Activated CD4-positive, alpha-beta memory T cell treated with anti-CD3 and anti-CD28 coated beads for 36 hours (primary cell): ENCODE measurements at regions of chr6 and their contacts with region 1.

Region 1: DNA sequence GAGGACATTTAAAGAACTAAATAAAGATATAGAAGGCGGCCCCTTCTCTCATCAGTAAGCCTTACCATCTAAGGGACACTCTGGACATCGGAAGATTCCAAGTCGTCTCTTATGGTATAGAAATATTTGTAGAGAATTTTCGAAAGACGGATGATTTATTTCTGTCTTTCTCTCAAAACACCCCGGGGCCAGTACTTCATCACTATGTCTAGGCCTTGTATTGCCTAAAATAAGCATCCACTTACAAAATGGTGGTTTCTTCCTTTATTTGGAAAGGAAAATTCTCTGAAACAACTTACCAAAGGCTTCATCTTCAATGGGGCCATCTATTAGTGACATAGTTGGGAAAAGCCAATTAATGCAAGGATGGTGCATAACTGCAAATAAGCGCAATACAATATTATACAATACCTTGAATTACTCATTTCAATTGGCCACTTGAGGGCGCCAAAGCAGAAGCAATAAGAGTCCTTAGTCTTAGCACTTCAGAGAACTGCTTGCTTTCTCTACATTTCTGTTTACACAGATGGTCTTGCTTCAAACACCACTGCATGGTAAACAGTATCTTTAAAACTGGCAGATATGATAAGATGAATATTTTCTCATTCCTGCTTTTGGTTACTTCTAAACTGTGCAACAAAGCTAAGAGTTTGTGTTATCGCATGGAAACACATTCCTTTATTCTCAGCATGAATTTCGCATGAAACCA is 113.2 kb downstream of the VIP start:
- DNase-seq: peak; percentile 66
- H3K4me3 Mint-ChIP-seq: no peak overlapping the region
- H3K27ac Mint-ChIP-seq: no peak overlapping the region
- H3K4me1 Mint-ChIP-seq: peaks cover 5% of the 10 kb centered on the region
- H3K27me3 Mint-ChIP-seq: peaks cover 10% of the 10 kb centered on the region

Region 2: DNA sequence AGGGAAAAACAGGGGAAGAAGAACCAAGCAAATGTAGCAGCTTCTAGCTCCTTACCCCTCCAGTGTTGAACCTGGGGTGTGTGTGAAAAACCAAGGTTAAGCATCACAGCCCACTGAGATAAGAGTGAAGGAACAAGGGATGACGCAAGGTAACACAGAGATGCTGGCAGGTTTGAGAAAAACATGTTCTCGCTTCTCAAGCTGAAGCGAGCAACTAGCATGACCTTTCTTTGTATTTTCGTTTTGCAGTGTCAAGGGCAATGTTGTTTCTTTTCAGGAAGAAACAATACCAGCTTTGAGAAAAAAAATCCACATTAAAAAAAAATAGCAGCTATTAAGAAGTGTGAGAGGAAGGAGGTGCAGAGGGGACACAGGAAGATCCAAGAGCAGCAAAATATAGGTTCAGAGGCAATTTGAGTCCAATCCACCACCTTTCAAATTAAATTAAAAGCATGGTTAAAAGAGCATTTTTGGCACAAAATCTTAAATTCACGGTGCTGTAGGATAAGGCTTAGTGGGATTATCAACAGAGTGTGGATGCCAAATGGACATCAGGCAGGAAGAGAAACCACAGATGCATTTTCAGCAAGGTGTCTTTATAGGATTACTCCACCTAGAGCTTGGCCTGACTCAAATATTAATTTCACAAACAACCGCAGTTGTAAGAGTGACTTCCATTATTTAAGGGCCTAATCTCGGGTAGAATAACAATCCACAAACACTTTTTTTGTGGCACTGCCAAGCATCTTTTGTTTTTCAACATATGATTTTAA is 297.5 kb before region 1 on chr6:
- CTCF ChIA-PET with region 1: no interaction called
- POLR2A ChIA-PET with region 1: no interaction called
- intact Hi-C with region 1: no loop called
- DNase-seq: no peak
- H3K4me3 Mint-ChIP-seq: no peak overlapping the region
- H3K27ac Mint-ChIP-seq: no peak overlapping the region
- H3K4me1 Mint-ChIP-seq: no peaks in the 10 kb centered on the region
- H3K27me3 Mint-ChIP-seq: no peaks in the 10 kb centered on the region

Region 3: GRCh38 chr6:152783217-152783878 is 80.4 kb before region 1 on chr6:
- CTCF ChIA-PET with region 1: no interaction called
- POLR2A ChIA-PET with region 1: no interaction called
- intact Hi-C with region 1: no loop called
- DNase-seq: no peak
- H3K4me3 Mint-ChIP-seq: no peak overlapping the region
- H3K27ac Mint-ChIP-seq: no peak overlapping the region
- H3K4me1 Mint-ChIP-seq: no peaks in the 10 kb centered on the region
- H3K27me3 Mint-ChIP-seq: no peaks in the 10 kb centered on the region

Region 4: DNA sequence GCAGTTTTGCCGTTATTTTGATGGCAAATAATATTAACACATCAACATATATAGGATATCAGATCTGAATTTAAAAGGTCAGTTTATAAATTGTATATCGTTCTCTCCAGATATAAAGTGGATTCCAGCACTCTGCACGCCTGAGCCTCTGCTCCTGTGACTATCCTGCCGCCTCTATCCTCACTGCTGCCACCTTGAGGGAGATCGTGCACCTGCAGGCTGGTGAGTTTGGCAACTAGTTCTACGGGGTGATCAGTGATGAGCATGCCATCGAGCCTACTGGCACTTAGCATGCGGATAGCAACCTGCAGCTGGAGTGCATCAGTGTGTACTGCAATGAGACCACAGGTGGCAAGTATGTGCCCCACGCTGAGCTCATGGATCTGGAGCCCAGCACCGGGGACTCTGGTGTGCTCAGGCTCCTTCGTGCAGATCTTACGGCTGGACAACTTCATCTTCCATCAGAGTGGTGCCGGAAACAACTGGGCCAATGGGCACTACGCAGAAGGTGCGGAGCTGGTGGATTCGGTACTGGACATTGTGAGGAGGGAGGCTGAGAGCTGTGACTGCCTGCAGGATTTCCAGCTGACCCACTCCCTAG is 34.1 kb after region 1 on chr6:
- CTCF ChIA-PET with region 1: interaction called, 8 read pairs
- POLR2A ChIA-PET with region 1: no interaction called
- intact Hi-C with region 1: loop called (anchors 2 kb)
- DNase-seq: peak; percentile 79
- H3K4me3 Mint-ChIP-seq: no peak overlapping the region
- H3K27ac Mint-ChIP-seq: no peak overlapping the region
- H3K4me1 Mint-ChIP-seq: peaks cover 3% of the 10 kb centered on the region
- H3K27me3 Mint-ChIP-seq: peaks cover 26% of the 10 kb centered on the region

Region 5: GRCh38 chr6:152948150-152948768 is 84.5 kb after region 1 on chr6:
- CTCF ChIA-PET with region 1: interaction called, 30 read pairs
- POLR2A ChIA-PET with region 1: no interaction called
- intact Hi-C with region 1: loop called (anchors 1 kb)
- DNase-seq: no peak
- H3K4me3 Mint-ChIP-seq: no peak overlapping the region
- H3K27ac Mint-ChIP-seq: no peak overlapping the region
- H3K4me1 Mint-ChIP-seq: peaks cover 2% of the 10 kb centered on the region
- H3K27me3 Mint-ChIP-seq: peaks cover 12% of the 10 kb centered on the region

Region 6: DNA sequence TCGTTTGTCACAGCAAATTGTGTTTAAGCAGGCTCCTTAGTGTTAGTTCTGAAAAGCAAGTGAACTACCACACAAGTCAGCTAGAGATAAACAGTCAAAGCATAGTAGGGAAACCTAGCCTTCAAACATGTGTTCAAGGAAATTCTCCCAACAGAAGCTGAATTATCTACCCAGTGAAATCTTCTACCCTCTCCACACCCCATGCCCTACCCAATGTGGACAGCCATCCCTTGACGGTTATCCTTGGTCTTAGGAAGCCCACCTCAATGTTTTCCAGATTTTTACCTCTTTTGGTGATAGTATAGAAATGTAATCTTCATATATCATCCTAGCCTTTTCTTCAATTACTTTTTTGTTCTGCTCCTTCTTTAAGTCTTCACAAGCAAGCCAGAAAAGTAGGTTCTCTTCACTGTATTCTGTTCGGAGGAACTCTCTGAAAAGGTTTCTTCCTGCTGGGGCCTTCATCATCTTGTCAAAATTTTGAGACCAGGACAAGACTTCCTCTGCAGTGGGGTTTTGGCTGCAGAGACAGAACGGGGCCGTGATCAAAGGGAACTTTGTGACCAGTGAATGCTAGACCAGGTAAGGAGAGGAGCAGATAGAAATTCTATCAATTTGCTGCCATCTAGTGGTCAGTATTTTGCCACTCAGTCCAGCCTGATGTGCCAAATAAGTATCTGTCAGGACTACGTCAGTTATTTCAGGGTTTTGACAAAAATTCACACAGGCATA is 160.4 kb after region 1 on chr6:
- CTCF ChIA-PET with region 1: interaction called, 10 read pairs
- POLR2A ChIA-PET with region 1: no interaction called
- intact Hi-C with region 1: loop called (anchors 1 kb)
- DNase-seq: peak; percentile 41
- H3K4me3 Mint-ChIP-seq: no peak overlapping the region
- H3K27ac Mint-ChIP-seq: no peak overlapping the region
- H3K4me1 Mint-ChIP-seq: peaks cover 5% of the 10 kb centered on the region
- H3K27me3 Mint-ChIP-seq: peaks cover 14% of the 10 kb centered on the region

Region 7: DNA sequence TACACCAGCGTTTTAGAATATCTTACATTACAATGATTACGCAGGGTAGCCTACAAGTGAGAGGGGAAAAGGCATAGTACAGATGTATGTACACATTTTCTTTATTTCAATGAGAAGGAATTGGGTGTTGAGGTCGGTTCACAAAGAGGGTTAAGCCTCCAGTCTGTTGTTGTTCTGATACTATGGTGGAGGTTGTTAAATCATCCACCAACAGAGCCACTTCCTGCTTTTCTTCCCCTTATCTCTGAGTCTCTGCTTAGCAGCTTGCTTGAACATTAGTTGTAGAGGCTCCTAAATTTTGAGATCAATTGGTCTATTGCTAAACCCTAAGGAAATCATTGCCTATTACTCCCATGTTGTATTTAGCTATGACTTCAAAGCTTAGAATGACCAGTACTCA is 260.0 kb after region 1 on chr6:
- CTCF ChIA-PET with region 1: no interaction called
- POLR2A ChIA-PET with region 1: no interaction called
- intact Hi-C with region 1: no loop called
- DNase-seq: no peak
- H3K4me3 Mint-ChIP-seq: no peak overlapping the region
- H3K27ac Mint-ChIP-seq: no peak overlapping the region
- H3K4me1 Mint-ChIP-seq: no peaks in the 10 kb centered on the region
- H3K27me3 Mint-ChIP-seq: peaks cover 25% of the 10 kb centered on the region